Mammary epithelial cell (primary cell): ENCODE measurements at regions of chr17 and their contacts with region 1.

Region 1: DNA sequence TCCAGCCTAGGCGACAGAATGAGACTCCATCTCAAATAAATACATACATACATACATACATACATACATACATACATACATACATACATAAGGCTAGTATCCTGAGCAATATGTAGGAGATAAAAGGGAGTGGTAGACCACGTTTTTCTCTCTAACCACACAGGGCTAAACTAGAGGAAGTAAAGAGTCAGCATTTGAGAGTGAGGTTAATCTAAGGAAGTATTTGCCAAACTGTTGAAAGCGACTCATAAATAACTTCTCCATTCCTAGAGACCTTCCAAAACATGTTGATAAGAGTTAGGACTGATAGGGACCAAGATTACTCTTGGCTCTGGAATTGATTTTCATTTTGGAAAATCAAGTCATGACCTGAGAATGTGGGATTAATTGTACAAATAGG is 68.9 kb downstream of the NEUROD2 start:
- DNase-seq: no peak
- H3K4me3 ChIP-seq: no peak overlapping the region
- H3K27ac ChIP-seq: no peak overlapping the region
- H3K4me1 ChIP-seq: peaks cover 4% of the 10 kb centered on the region
- H3K27me3 ChIP-seq: no peaks in the 10 kb centered on the region
- CTCF ChIP-seq: no peak

Region 2: DNA sequence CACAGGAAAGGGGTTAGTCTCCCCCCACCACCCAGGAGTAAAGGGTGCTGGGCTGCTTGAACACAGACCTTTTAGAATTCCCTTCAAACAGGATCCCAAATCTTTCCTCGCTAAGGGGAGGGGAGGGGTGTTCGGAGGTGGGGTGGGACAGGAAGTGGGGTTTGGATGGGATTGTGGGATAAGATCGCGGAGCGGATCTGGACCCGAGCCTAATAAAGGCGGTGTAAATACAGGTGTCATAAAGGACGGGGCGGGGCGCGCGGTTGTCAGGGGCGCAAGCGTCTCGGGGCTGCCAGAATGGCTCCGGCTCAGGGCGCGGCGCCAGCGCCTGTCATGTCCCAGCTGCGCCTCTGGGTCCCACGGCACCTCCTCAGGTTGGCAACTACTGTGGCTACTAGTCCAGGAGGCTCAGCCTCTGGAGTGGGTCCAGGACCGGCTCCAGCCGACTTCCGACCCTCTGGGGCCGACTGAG is 511.9 kb before region 1 on chr17:
- CTCF ChIA-PET with region 1: interaction called, 11 read pairs
- dilution Hi-C with region 1: no loop called
- in situ Hi-C with region 1: no loop called
- intact Hi-C with region 1: no loop called
- DNase-seq: peak; percentile 16
- H3K4me3 ChIP-seq: peak overlapping the region; percentile 32 to 38 (median 38)
- H3K27ac ChIP-seq: no peak overlapping the region
- H3K4me1 ChIP-seq: peaks cover 9% of the 10 kb centered on the region
- H3K27me3 ChIP-seq: peaks cover 5% of the 10 kb centered on the region
- CTCF ChIP-seq: no peak

Region 3: GRCh38 chr17:39461113-39461925 is 77.5 kb before region 1 on chr17 and contains the start of gene CDK12:
- CTCF ChIA-PET with region 1: no interaction called
- dilution Hi-C with region 1: loop called (anchors 5 kb)
- in situ Hi-C with region 1: no loop called
- intact Hi-C with region 1: no loop called
- DNase-seq: peak; percentile 99
- H3K4me3 ChIP-seq: peak within 1 kb of the TSS; percentile 84 to 95 (median 88)
- H3K27ac ChIP-seq: peak within 1 kb of the TSS; percentile 97
- H3K4me1 ChIP-seq: no peaks in the 10 kb centered on the region
- H3K27me3 ChIP-seq: no peaks in the 10 kb centered on the region
- CTCF ChIP-seq: no peak
- total RNA-seq, gene CDK12: 44.5 to 66.6 TPM

Region 4: GRCh38 chr17:39573447-39574298 is 34.8 kb after region 1 on chr17:
- CTCF ChIA-PET with region 1: no interaction called
- dilution Hi-C with region 1: loop called (anchors 5 kb)
- in situ Hi-C with region 1: no loop called
- intact Hi-C with region 1: no loop called
- DNase-seq: peak; percentile 67
- H3K4me3 ChIP-seq: peak overlapping the region; percentile 52 to 61 (median 57)
- H3K27ac ChIP-seq: peak overlapping the region; percentile 48
- H3K4me1 ChIP-seq: peaks cover 4% of the 10 kb centered on the region
- H3K27me3 ChIP-seq: no peaks in the 10 kb centered on the region
- CTCF ChIP-seq: no peak

Region 5: DNA sequence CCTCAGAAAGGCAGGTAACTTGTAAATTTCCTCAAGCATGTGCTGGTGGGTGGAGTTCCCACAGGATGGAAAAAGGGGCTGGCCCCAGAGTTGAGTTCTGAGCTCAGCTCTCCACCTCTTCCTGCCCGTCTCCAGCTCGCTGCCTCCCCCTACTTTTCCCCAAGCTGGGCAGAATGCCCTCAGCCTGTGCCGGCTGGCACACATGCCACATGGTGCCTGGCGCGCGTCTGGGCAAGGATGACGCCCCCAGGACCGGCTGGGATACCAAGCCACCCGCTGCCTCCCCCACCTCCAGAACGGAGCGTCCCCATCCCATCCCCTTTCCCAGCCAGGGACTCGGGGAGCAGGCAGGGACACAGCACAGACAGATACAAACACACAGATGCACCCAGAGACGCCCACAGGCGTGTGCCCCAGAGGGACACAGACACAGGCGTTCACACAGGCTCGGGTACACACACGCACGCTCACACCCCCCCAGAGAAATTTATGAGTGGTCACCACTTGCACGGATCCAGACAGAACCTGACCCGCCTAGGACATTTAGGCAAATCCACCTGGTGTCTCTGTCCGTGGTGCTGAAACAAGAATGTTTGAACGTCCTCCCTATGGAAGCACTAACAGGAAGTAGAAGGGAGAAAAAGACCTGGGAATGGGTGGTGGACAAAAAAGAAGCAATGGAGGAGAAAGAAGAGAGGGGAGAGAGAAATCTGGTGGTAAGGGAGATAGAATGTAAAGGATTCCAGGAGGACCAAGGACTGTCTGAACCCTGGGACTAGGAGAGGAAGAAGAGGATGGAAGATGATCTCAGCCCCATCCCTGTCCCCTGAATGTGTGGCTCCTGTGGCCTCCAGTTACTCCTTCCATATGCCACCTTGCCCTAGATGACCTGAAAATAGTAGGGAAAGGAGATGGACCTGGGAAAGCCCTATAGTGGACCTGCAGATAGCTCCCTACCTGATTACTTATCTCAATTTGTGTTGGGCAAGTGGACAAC is 53.4 kb after region 1 on chr17:
- CTCF ChIA-PET with region 1: no interaction called
- dilution Hi-C with region 1: no loop called
- in situ Hi-C with region 1: no loop called
- intact Hi-C with region 1: no loop called
- DNase-seq: peak; percentile 40
- H3K4me3 ChIP-seq: no peak overlapping the region
- H3K27ac ChIP-seq: no peak overlapping the region
- H3K4me1 ChIP-seq: no peaks in the 10 kb centered on the region
- H3K27me3 ChIP-seq: peaks cover 14% of the 10 kb centered on the region
- CTCF ChIP-seq: no peak

Region 6: DNA sequence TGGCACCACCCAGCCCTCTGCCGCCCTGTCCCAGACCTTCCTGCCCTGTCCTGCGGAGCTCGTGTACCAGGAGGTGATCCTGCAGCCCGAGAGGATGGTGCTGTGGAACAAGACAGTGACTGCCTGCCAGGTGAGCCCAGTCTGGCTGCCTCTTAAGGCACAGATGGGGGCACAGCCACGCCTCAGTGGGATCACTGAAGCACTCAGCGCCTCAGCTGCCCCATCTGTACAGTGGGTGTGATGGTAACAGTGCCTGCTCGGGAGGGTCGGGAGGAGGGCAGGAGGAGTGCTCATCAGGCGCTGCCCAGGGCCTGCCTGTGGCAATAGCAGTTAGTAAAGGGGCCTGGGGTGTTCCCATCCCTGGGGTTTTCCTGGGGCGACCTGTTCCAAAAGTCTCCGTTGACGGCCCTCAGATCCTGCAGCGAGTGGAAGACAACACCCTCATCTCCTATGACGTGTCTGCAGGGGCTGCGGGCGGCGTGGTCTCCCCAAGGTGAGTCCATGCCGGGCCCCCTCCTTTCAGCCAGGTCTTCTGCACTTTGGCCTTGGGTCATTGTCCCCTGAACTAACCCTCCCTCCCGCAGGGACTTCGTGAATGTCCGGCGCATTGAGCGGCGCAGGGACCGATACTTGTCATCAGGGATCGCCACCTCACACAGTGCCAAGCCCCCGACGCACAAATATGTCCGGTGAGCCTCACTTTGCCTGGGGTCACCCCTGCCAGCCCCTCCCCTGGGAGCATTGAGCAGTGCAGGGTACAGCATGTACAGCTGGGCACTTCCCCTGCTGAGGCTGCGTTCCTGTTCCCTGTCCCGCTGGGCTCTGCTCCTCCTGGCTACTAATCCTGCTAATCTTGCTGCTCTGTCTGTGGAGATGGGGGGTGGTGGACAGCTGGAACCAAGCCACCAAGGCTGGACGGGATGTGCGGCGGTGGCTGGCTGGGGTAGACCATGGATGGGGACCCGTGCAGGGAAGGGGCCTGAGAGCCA is 121.8 kb after region 1 on chr17:
- CTCF ChIA-PET with region 1: no interaction called
- dilution Hi-C with region 1: no loop called
- in situ Hi-C with region 1: no loop called
- intact Hi-C with region 1: no loop called
- DNase-seq: no peak
- H3K4me3 ChIP-seq: no peak overlapping the region
- H3K27ac ChIP-seq: no peak overlapping the region
- H3K4me1 ChIP-seq: no peaks in the 10 kb centered on the region
- H3K27me3 ChIP-seq: no peaks in the 10 kb centered on the region
- CTCF ChIP-seq: no peak

Region 7: GRCh38 chr17:39671651-39672521 is 133.0 kb after region 1 on chr17:
- CTCF ChIA-PET with region 1: no interaction called
- dilution Hi-C with region 1: loop called (anchors 5 kb)
- in situ Hi-C with region 1: no loop called
- intact Hi-C with region 1: no loop called
- DNase-seq: peak; percentile 15
- H3K4me3 ChIP-seq: no peak overlapping the region
- H3K27ac ChIP-seq: no peak overlapping the region
- H3K4me1 ChIP-seq: peaks cover 8% of the 10 kb centered on the region
- H3K27me3 ChIP-seq: no peaks in the 10 kb centered on the region
- CTCF ChIP-seq: peak; percentile 22 to 56

Region 8: DNA sequence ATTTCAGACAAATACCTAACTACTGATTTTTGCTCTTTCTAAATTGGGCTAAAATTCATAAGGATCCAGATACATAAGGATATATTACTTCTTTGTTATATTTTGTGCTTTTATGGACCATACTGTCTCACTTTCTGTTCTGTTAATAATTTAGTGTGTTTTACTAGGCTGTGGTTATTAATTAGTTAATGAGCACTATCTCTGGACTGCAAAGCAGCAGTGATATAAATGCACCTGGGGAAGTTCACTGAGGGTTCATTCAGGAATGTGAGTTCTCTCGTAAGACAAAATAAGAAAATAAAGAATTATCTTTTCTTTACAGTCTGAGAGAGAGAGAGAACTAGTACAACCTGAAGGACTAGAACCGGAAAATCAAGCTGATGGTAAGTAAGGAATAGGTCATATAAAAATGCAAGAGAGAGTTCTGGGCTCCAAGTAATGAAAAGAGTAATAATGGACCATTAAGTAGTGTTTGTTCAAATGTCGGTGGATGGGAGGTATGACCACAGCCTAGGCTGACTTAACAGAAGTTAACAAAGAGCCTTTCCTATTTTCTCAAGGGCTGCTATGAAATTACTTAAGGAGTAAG is 269.6 kb after region 1 on chr17:
- CTCF ChIA-PET with region 1: no interaction called
- dilution Hi-C with region 1: loop called (anchors 5 kb)
- in situ Hi-C with region 1: no loop called
- intact Hi-C with region 1: no loop called
- DNase-seq: no peak
- H3K4me3 ChIP-seq: no peak overlapping the region
- H3K27ac ChIP-seq: no peak overlapping the region
- H3K4me1 ChIP-seq: no peaks in the 10 kb centered on the region
- H3K27me3 ChIP-seq: peaks cover 3% of the 10 kb centered on the region
- CTCF ChIP-seq: no peak